Activated B cell treated with CpG ODN at 0.5 μM for 24 hours (primary cell): ENCODE measurements at regions of chr11 and their contacts with region 1.

Region 1: GRCh38 chr11:14435717-14436512 is 63.7 kb downstream of the COPB1 start:
- DNase-seq: no peak
- ATAC-seq: no peak
- H3K4me3 Mint-ChIP-seq: no peak overlapping the region
- H3K27ac Mint-ChIP-seq: no peak overlapping the region
- H3K4me1 Mint-ChIP-seq: peaks cover 22% of the 10 kb centered on the region
- H3K27me3 Mint-ChIP-seq: no peaks in the 10 kb centered on the region
- CTCF ChIP-seq: no peak

Region 2: GRCh38 chr11:13734530-13734929 is 701.4 kb before region 1 on chr11:
- CTCF ChIA-PET with region 1: no interaction called
- POLR2A ChIA-PET with region 1: no interaction called
- intact Hi-C with region 1: no loop called
- DNase-seq: no peak
- ATAC-seq: no peak
- H3K4me3 Mint-ChIP-seq: no peak overlapping the region
- H3K27ac Mint-ChIP-seq: no peak overlapping the region
- H3K4me1 Mint-ChIP-seq: no peaks in the 10 kb centered on the region
- H3K27me3 Mint-ChIP-seq: no peaks in the 10 kb centered on the region
- CTCF ChIP-seq: no peak

Region 3: GRCh38 chr11:14418803-14419417 is 17.0 kb before region 1 on chr11:
- CTCF ChIA-PET with region 1: no interaction called
- POLR2A ChIA-PET with region 1: no interaction called
- intact Hi-C with region 1: loop called (anchors 2 kb)
- DNase-seq: no peak
- ATAC-seq: no peak
- H3K4me3 Mint-ChIP-seq: no peak overlapping the region
- H3K27ac Mint-ChIP-seq: no peak overlapping the region
- H3K4me1 Mint-ChIP-seq: peaks cover 16% of the 10 kb centered on the region
- H3K27me3 Mint-ChIP-seq: no peaks in the 10 kb centered on the region
- CTCF ChIP-seq: no peak